Lower leg skin (tissue), 4 donors: ENCODE measurements at regions of chr2 and their contacts with region 1.

Region 1: GRCh38 chr2:75464348-75464946 is 96.3 kb downstream of the EVA1A start:
- DNase-seq: no peak
- H3K4me3 ChIP-seq: no peak overlapping the region
- CTCF ChIP-seq: no peak
- POLR2A ChIP-seq: no peak

Region 2: DNA sequence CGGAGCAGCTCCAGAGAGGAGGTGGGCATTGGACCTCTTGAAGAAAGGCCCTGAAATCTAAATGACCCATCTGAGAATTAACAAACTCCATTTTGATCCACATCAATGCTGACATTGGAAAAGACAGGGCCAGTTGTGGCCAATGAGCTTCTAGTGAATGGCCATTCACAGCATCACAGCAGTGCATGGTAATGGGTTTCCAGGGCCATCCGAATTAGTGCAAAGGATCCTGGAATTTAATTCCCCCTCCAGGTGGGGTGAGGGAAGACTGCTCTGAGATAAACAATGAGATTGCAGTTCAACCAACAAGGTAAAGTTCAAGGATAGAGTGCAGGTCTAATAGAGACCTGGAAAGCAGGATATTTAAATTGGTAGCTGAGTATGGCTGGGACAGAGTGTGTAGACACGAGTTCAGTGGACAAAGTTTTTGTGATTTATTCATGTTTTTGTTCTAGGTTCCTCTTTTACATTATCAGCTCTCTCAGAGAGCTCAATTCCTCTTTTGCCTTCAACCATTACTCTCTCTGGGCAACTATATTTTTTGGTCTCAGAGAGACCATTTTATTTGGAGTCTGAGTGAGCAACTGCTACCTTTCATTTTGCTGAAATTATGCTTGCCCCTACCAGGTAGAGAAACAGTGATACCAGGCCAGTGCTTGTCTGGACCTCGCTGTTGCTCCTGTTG is 270.1 kb before region 1 on chr2:
- intact Hi-C with region 1: no loop called
- DNase-seq: no peak
- H3K4me3 ChIP-seq: no peak overlapping the region
- CTCF ChIP-seq: no peak
- POLR2A ChIP-seq: no peak

Region 3: GRCh38 chr2:75608684-75609333 is 144.4 kb after region 1 on chr2:
- intact Hi-C with region 1: loop called (anchors 5 kb)
- DNase-seq: peak; percentile 27 to 90
- H3K4me3 ChIP-seq: no peak overlapping the region
- CTCF ChIP-seq: peak in 1 of 3 donors; percentile 63
- POLR2A ChIP-seq: no peak

Region 4: GRCh38 chr2:75627895-75628504 is 163.6 kb after region 1 on chr2:
- intact Hi-C with region 1: loop called (anchors 5 kb)
- DNase-seq: peak in 1 of 2 donors; percentile 45
- H3K4me3 ChIP-seq: no peak overlapping the region
- CTCF ChIP-seq: peak in 1 of 3 donors; percentile 19
- POLR2A ChIP-seq: no peak